ENCODE measurements at regions of chr17 and their contacts with region 1.

Region 1: GRCh38 chr17:73365906-73366623 is 54.3 kb upstream of the CDC42EP4 start:
- DNase-seq: peak in 1 of 3 donors; percentile 51
- ATAC-seq: peak; percentile 46 to 71 (median 59)
- H3K4me3 ChIP-seq: no peak overlapping the region
- H3K27ac ChIP-seq: peak overlapping the region in 2 of 3 donors; percentile 38 to 43
- H3K4me1 ChIP-seq: no peaks in the 10 kb centered on the region
- H3K27me3 ChIP-seq: no peaks in the 10 kb centered on the region
- CTCF ChIP-seq: no peak
- POLR2A ChIP-seq: no peak

Region 2: DNA sequence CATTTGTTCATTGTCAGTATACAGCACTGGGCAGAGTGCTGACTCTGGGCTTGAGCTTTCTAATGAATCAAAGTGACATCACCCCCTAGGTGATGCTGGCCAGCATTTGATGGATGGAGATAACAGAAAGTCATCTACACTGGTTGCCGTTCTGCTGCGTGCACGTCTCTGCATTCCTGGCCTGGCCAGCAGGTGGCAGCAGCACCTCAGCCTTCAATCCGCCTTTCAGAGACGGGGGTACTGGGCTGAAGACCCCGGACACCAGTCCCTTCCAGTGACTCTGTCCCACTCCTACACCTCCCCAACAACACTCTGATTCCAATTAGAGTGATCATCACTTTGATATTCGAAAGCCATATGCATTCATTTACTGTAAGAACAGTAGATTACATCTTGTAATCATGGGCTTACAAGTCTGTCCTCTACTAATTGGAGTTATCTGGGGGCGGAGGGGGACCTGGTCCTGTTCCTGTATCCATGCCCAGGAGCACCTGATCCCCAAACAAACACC is 110.3 kb before region 1 on chr17:
- intact Hi-C with region 1: loop called (anchors 5 kb)
- DNase-seq: peak; percentile 52 to 64 (median 56)
- ATAC-seq: peak; percentile 81 to 96 (median 87)
- H3K4me3 ChIP-seq: no peak overlapping the region
- H3K27ac ChIP-seq: no peak overlapping the region
- H3K4me1 ChIP-seq: no peaks in the 10 kb centered on the region
- H3K27me3 ChIP-seq: no peaks in the 10 kb centered on the region
- CTCF ChIP-seq: peak; percentile 97 to 99 (median 98)
- POLR2A ChIP-seq: no peak

Region 3: DNA sequence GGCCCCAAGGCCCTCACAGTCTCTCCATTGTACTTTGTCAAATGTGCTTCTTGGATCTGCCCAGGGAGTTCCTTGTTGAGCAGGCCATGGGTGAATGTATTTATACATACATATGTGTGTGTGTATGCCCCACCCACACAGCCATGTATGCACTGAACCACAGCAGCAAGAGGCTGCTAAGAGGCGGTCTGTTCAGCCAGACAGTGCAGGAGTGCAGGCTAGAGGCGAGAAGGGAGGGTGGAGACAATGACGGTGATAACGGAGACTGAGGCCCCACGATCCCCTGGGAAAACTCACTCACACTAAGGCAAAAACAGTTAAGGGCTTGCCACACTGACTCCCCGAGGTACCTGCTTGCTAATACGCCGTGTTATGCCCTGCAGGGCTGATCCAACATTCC is 96.8 kb after region 1 on chr17:
- intact Hi-C with region 1: no loop called
- DNase-seq: no peak
- ATAC-seq: no peak
- H3K4me3 ChIP-seq: no peak overlapping the region
- H3K27ac ChIP-seq: no peak overlapping the region
- H3K4me1 ChIP-seq: no peaks in the 10 kb centered on the region
- H3K27me3 ChIP-seq: no peaks in the 10 kb centered on the region
- CTCF ChIP-seq: no peak
- POLR2A ChIP-seq: no peak